Naive thymus-derived CD8-positive, alpha-beta T cell (primary cell): ENCODE measurements at regions of chr1 and their contacts with region 1.

Region 1: DNA sequence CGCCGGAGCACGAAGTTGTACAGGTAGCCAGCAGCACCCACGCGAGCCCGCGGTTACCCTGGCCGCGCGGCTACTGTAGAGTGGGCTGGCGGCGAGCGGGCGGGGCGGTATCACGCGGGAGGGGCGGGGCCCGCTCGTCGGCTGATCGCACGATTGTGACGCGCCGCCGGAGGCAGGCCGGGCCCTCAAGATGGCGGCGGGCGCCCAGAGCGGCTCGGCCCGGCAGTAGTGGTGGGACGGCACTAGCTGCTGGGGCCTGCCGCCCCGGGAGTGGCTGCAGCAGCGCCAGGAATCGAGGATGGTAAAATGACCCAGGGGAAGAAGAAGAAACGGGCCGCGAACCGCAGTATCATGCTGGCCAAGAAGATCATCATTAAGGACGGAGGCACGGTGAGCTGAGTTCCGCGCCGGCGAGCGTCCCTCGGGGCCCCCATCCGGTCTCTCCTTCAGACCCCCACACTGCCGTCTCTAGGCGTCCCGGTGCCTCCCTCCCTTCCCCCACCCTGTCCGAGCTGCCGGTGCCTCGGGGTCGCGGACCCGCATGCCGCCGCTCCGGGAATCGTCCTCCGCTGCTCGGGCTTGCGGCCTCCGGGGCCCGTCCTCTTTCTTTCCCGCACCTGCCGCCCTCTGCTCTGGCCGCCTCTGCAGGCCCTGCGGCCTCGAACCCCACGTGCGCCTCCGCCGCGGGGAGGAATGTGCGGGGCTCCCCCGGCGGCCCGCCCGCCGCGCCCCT is 68.3 kb downstream of the SLC35A3 start:
- DNase-seq: peak; percentile 83 to 92 (median 89)
- ATAC-seq: peak; percentile 78 to 84
- H3K4me3 Mint-ChIP-seq: peak overlapping the region; percentile 90 to 99 (median 97)
- H3K27ac Mint-ChIP-seq: peak overlapping the region; percentile 95 to 100 (median 100)
- H3K4me1 Mint-ChIP-seq: peaks cover 17 to 60% (median 50%) of the 10 kb centered on the region in 4 donors
- H3K27me3 Mint-ChIP-seq: no peaks in the 10 kb centered on the region

Region 2: GRCh38 chr1:99849744-99850458 is 188.2 kb before region 1 on chr1 and contains the start of gene AGL:
- POLR2A ChIA-PET with region 1: interaction called, 10 read pairs
- DNase-seq: peak; percentile 80 to 93 (median 86)
- ATAC-seq: peak; percentile 96
- H3K4me3 Mint-ChIP-seq: peak within 1 kb of the TSS; percentile 90 to 100 (median 95)
- H3K27ac Mint-ChIP-seq: peak within 1 kb of the TSS; percentile 91 to 99 (median 97)
- H3K4me1 Mint-ChIP-seq: peaks cover 23 to 40% (median 30%) of the 10 kb centered on the region in 4 donors
- H3K27me3 Mint-ChIP-seq: peaks cover 0 to 2% (median 0%) of the 10 kb centered on the region in 5 donors
- polyA plus RNA-seq, gene AGL: 9.8 to 11.8 (median 11.6) TPM

Region 3: DNA sequence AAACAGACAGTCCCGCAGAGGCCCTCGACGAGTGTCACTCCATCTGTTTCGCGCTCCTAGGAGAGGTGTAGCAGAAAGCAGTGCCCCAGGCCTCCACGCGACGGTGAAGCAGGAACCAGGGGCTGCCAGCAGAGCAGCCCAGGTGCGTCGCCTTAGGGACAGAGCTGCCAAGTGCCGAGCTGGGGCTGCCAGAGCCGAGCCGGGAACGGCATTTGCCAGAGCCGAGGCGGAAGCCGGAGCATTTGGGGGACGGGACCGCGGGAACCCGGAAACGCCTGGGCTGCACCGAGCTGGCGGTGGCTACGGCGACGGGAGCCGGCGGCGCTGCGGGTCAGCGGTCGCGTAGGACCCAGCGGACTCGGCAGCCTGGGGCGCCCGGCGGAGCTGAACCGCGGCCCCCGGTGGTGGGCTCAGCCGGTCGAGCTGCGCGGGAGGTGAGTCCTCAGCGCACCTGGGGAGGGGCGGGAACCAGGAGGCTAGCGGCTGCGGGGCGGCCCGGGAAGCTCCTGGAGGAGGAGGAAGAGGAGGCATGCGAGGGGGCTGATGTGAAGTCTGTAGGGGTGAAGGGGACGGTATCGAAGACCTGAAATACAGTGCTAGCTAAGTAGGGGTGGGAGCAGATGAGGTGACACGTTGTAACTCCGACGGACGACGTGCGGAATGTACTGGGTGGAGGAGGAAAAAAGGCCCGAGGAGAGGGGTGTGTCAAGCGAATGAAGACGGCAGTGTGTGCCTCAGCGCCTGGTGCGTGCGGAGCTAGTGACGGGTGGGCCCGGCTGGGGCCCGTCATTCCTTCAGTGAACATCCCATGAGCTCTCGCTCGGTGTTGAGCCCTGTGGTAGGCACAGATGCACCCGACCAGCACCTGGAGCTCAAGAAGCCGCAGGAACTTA is 68.1 kb before region 1 on chr1 and contains the start of gene SLC35A3:
- POLR2A ChIA-PET with region 1: interaction called, 17 read pairs
- DNase-seq: peak; percentile 66 to 85 (median 77)
- ATAC-seq: peak; percentile 80 to 88
- H3K4me3 Mint-ChIP-seq: peak within 1 kb of the TSS; percentile 96 to 100 (median 99)
- H3K27ac Mint-ChIP-seq: peak within 1 kb of the TSS; percentile 88 to 100 (median 98)
- H3K4me1 Mint-ChIP-seq: peaks cover 14 to 43% (median 36%) of the 10 kb centered on the region in 4 donors
- H3K27me3 Mint-ChIP-seq: no peaks in the 10 kb centered on the region
- polyA plus RNA-seq, gene SLC35A3: 13.3 to 15.3 (median 15.1) TPM

Region 4: GRCh38 chr1:100132566-100133477 is 94.7 kb after region 1 on chr1 and contains the starts of genes SASS6 and TRMT13:
- POLR2A ChIA-PET with region 1: interaction called, 12 read pairs
- DNase-seq: peak; percentile 80 to 98 (median 92)
- ATAC-seq: peak; percentile 96 to 97
- H3K4me3 Mint-ChIP-seq: peak within 1 kb of the TSS; percentile 96 to 100 (median 99)
- H3K27ac Mint-ChIP-seq: peak within 1 kb of the TSS; percentile 95 to 99 (median 98)
- H3K4me1 Mint-ChIP-seq: peaks cover 12 to 47% (median 33%) of the 10 kb centered on the region in 4 donors
- H3K27me3 Mint-ChIP-seq: no peaks in the 10 kb centered on the region
- polyA plus RNA-seq, gene SASS6: 1.7 to 2.4 (median 1.8) TPM
- polyA plus RNA-seq, gene TRMT13: 8.7 to 12.7 (median 11.9) TPM